Activated naive CD4-positive, alpha-beta T cell treated with anti-CD3 and anti-CD28 coated beads for 36 hours (primary cell): ENCODE measurements at regions of chr9 and their contacts with region 1.

Region 1: GRCh38 chr9:6433405-6433804 is 20.4 kb downstream of the UHRF2 start:
- DNase-seq: no peak
- H3K4me3 Mint-ChIP-seq: no peak overlapping the region
- H3K27ac Mint-ChIP-seq: peak overlapping the region; percentile 51
- H3K4me1 Mint-ChIP-seq: peaks cover 65% of the 10 kb centered on the region
- H3K27me3 Mint-ChIP-seq: no peaks in the 10 kb centered on the region

Region 2: DNA sequence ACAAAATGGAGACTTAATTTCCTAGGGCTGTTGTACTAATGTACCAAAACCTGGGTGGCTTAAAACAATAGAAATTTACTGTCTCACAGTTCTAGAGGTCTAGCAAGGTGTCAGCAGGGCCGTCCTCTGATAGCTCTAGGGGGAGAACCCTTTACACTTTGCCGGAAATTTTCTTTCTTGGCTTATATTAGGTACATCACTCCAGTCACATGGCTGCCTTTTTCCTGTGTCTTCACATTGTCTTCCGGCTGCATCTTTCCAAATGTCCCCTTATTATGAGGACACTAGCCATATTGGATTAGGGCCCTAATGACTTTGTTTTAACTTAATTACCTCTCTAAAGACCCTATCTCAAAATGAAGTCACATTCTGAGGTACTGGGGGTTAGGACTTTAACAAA is 14.6 kb before region 1 on chr9:
- CTCF ChIA-PET with region 1: interaction called, 4 read pairs
- intact Hi-C with region 1: loop called (anchors 1 kb)
- DNase-seq: no peak
- H3K4me3 Mint-ChIP-seq: no peak overlapping the region
- H3K27ac Mint-ChIP-seq: peak overlapping the region; percentile 93
- H3K4me1 Mint-ChIP-seq: peaks cover 63% of the 10 kb centered on the region
- H3K27me3 Mint-ChIP-seq: no peaks in the 10 kb centered on the region